ENCODE measurements at regions of chrX and their contacts with region 1.

Region 1: DNA sequence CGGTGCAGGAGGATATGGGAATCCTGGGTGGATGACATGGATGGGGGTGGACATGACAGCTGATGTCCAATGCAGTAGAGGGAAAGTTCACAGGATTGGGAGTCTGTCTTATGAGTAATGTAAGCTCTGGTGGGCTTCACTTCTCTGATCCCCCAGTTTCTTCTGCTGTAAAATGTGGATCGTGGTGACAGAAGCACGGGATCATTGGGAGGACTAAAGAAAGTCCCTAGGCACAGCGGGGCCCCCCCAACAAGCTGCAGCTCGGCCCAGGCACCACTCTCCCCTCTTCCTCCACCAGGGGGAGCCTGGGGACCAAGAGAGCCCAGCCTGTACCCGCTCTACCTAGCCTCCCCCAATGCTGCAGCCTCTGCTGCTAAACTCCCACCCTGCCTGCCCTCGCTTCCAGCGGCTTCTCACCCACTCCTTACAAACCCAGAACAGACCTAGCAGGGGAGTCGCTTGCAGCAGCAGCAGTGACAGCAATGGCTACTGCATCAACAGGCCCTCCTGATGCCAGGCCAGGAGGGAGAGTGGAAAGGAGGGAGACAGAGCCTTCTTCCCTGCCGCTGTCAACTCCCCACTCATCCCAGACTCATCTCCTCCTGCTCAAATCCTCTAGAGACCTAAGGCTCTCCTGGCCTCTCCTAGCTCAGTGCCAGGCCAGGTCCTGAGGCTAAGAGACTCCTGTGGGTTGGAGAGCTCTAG is 36.1 kb upstream of the IQSEC2 start:
- DNase-seq: peak; percentile 68
- H3K4me3 Mint-ChIP-seq: no peak overlapping the region
- H3K27ac Mint-ChIP-seq: no peak overlapping the region
- H3K4me1 Mint-ChIP-seq: no peaks in the 10 kb centered on the region
- H3K27me3 Mint-ChIP-seq: peaks cover 68% of the 10 kb centered on the region
- CTCF ChIP-seq: peak; percentile 83

Region 2: DNA sequence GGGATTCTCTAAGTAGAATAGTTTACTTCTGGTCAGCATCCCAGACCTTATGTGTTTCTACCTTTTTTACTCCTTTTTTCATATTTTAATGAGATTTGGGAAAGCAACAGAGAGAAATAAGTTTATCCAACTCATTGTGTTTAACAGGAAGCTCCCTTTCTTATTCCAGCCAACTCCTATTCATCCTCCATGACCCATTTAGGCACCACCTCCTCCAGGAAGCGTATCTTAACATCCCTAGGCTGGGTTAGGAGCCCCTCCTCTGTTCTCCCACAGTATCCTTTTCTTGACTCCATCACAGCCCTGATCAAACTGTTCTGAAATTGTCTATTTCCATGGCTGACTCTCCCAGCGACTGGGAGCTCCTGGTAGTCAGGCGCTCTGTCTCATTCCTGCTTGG is 17.4 kb before region 1 on chrX:
- CTCF ChIA-PET with region 1: interaction called, 13 read pairs
- POLR2A ChIA-PET with region 1: interaction called, 4 read pairs
- intact Hi-C with region 1: no loop called
- DNase-seq: no peak
- H3K4me3 Mint-ChIP-seq: no peak overlapping the region
- H3K27ac Mint-ChIP-seq: no peak overlapping the region
- H3K4me1 Mint-ChIP-seq: no peaks in the 10 kb centered on the region
- H3K27me3 Mint-ChIP-seq: peaks cover 54% of the 10 kb centered on the region
- CTCF ChIP-seq: no peak

Region 3: DNA sequence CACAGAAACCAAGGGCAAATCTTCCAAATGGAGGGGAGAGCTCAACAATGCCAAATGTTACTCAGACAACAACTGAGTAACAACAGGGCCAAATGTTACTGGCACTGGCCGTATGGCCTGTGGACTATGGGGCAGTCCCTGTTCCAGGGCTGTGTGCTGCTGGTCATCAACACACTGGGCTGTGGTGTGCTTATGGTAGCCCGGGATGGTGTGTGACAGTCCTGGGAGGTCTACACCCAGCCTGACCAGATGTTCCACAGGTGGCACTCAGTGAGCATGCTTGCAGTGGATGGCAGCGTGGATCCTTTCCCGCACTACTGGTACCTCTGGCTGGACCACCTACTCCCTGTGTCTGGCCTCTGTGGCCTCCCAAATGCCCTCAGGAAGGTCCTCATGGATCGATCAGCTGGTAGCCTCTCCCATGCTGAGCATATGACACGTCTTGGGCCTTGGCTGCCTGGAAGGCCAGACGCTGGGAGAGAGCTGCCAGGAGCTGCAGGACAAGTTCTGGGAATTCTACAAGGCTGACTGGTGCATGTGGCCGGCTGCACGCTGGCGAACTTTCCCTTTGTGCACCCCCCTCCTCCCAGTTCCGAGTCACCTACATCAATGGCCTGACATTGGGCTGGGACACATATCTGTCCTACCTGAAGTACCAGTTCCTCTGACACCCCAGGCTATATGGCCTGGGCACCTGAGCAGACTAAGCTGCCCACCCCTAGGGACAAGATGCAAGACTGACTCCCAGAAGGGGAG is 23.5 kb after region 1 on chrX:
- CTCF ChIA-PET with region 1: interaction called, 10 read pairs
- POLR2A ChIA-PET with region 1: no interaction called
- intact Hi-C with region 1: no loop called
- DNase-seq: no peak
- H3K4me3 Mint-ChIP-seq: no peak overlapping the region
- H3K27ac Mint-ChIP-seq: no peak overlapping the region
- H3K4me1 Mint-ChIP-seq: no peaks in the 10 kb centered on the region
- H3K27me3 Mint-ChIP-seq: peaks cover 21% of the 10 kb centered on the region
- CTCF ChIP-seq: no peak

Region 4: GRCh38 chrX:53441531-53442321 is 124.2 kb after region 1 on chrX:
- CTCF ChIA-PET with region 1: interaction called, 49 read pairs
- POLR2A ChIA-PET with region 1: interaction called, 8 read pairs
- intact Hi-C with region 1: loop called (anchors 1 kb)
- DNase-seq: peak; percentile 82
- H3K4me3 Mint-ChIP-seq: peak overlapping the region; percentile 61
- H3K27ac Mint-ChIP-seq: peak overlapping the region; percentile 21
- H3K4me1 Mint-ChIP-seq: peaks cover 13% of the 10 kb centered on the region
- H3K27me3 Mint-ChIP-seq: peaks cover 24% of the 10 kb centered on the region
- CTCF ChIP-seq: no peak

Region 5: GRCh38 chrX:53526999-53527398 is 209.5 kb after region 1 on chrX:
- CTCF ChIA-PET with region 1: interaction called, 12 read pairs
- POLR2A ChIA-PET with region 1: no interaction called
- intact Hi-C with region 1: no loop called
- DNase-seq: no peak
- H3K4me3 Mint-ChIP-seq: no peak overlapping the region
- H3K27ac Mint-ChIP-seq: no peak overlapping the region
- H3K4me1 Mint-ChIP-seq: no peaks in the 10 kb centered on the region
- H3K27me3 Mint-ChIP-seq: peaks cover 68% of the 10 kb centered on the region
- CTCF ChIP-seq: no peak

Measured in MCF 10A (cell line).